Activated naive CD8-positive, alpha-beta T cell treated with anti-CD3 and anti-CD28 coated beads, Interleukin-2, amount 10 ng/mL, durations not matched to agents 7 days and 5 days (primary cell): ENCODE measurements at regions of chrX and their contacts with region 1.

Region 1: DNA sequence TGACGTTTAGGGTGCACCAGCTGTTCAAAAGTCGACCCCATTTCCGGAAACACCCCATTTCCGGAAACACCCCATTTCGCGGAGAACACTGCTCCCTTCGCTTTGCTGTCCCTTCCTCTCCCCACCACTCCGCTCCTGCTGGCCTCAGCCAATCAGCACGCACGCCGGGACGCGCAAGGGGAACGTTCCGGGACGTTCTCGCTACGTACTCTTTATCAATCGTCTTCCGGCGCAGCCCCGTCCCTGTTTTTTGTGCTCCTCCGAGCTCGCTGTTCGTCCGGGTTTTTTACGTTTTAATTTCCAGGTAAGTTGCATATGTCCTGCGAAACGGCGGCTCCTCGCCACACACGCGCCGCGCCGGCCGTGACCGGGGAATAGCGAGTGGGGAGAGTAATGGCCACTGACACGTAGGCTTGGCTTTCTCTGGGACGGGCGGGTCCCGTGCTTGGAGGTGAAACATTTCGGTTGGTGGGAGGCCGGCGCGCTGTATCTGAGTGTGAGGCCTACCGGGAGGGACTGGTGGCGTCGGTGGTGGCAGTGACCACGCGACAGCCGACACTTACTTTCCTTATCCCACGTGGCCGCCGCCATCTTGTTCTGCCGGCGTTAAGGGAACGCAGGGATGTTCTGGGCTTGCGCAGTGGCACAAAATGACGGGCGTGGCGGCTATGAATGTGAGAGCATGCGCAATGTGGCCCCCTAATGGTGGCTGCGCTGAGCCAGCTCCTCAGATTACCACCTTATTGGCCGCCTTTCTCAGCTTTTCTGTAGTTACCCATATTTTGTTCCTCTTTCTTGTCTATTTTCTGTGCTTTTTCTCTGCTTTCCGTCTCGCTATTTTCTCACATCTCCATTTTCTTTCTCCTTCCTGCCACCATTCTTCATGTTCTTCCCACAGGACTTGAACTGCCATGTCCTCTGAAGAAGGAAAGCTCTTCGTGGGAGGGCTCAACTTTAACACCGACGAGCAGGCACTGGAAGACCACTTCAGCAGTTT is at the start of gene RBM3:
- DNase-seq: peak; percentile 85
- ATAC-seq: peak; percentile 95
- H3K4me3 Mint-ChIP-seq: peak within 1 kb of the TSS; percentile 99
- H3K27ac Mint-ChIP-seq: peak within 1 kb of the TSS; percentile 99
- H3K4me1 Mint-ChIP-seq: peaks cover 8% of the 10 kb centered on the region
- H3K27me3 Mint-ChIP-seq: no peaks in the 10 kb centered on the region
- total RNA-seq, gene RBM3: 159 to 164 TPM

Region 2: DNA sequence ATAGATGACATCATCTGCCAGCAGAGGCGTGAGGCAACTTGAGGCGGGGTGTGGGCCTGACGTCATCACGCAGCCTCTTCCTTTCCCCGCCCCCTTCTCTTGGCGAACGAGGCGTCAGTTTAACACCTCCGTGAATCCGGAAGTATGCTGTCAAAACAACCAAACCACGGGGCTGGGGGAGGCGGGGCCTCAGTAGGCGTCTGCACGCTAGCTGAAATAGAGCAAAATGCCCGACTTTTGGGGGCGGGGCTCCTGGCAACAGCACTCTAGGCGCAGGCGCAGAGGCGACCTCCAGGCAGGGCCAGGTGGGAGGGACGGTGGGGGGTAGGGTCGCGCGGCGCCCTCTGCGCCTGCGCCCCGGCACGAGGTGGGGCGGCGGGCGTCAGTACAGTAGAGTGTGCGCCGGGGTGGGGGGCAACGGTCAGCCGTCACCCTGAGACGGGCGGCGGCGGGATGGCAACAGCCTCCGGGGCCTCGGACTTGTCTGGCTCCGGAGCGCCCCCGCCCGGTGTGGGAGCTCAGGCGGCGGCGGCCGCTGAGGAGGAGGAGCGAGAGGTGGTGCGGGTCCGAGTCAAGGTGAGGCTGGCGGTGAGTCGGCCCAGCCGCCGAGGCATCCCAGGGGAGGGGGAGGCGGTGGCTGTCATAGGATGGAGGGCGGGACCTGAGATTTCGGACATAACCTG is 35.1 kb before region 1 on chrX and contains the start of gene TBC1D25:
- POLR2A ChIA-PET with region 1: interaction called, 26 read pairs
- DNase-seq: peak; percentile 92
- ATAC-seq: peak; percentile 82
- H3K4me3 Mint-ChIP-seq: peak within 1 kb of the TSS; percentile 93
- H3K27ac Mint-ChIP-seq: peak within 1 kb of the TSS; percentile 98
- H3K4me1 Mint-ChIP-seq: peaks cover 17% of the 10 kb centered on the region
- H3K27me3 Mint-ChIP-seq: no peaks in the 10 kb centered on the region
- total RNA-seq, gene TBC1D25: 22.5 to 22.6 TPM

Region 3: GRCh38 chrX:48597353-48598264 is 23.0 kb after region 1 on chrX and contains the start of gene WDR13:
- POLR2A ChIA-PET with region 1: interaction called, 11 read pairs
- DNase-seq: peak; percentile 89
- ATAC-seq: peak; percentile 88
- H3K4me3 Mint-ChIP-seq: peak within 1 kb of the TSS; percentile 98
- H3K27ac Mint-ChIP-seq: peak within 1 kb of the TSS; percentile 99
- H3K4me1 Mint-ChIP-seq: peaks cover 7% of the 10 kb centered on the region
- H3K27me3 Mint-ChIP-seq: no peaks in the 10 kb centered on the region
- total RNA-seq, gene WDR13: 45.6 to 52.0 TPM